Heart left ventricle (tissue), 16 donors: ENCODE measurements at regions of chr4 and their contacts with region 1.

Region 1: DNA sequence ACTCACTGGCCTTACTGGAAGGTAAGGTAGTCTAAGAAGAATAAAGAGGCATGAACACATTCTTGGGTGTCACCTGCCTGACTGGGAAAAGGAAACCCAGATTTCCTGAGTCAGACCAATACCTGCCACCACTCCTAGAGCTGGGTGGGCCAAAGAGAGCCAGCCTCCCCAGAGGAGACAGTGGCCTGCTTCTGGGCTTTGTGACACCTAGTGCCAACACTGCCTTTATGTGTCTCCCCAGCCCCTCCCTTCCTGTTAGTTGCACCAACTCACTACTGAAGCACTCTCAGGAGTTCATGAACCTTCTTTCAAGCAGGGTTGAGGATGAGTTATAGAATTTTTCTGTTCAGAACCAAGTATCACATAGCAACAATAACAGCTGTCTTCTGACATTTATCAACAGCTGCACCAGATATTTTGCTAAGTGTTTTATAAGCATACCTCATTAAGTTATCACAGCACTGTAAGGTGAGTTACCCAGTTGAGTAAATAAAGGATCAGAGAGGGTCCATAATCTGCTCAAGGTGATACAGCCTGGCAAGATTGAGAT is 77.6 kb upstream of the ETNPPL start:
- DNase-seq: no peak
- ATAC-seq: no peak
- H3K4me3 ChIP-seq: no peak overlapping the region
- H3K27ac ChIP-seq: no peak overlapping the region
- H3K4me1 ChIP-seq: no peaks in the 10 kb centered on the region
- H3K27me3 ChIP-seq: no peaks in the 10 kb centered on the region
- CTCF ChIP-seq: no peak
- POLR2A ChIP-seq: no peak

Region 2: GRCh38 chr4:108620101-108620932 is 220.2 kb before region 1 on chr4 and contains the start of gene RPL34:
- intact Hi-C with region 1: no loop called
- DNase-seq: peak; percentile 96 to 99 (median 97)
- ATAC-seq: peak; percentile 100
- H3K4me3 ChIP-seq: peak within 1 kb of the TSS; percentile 38 to 92 (median 78)
- H3K27ac ChIP-seq: peak within 1 kb of the TSS; percentile 54 to 88 (median 80)
- H3K4me1 ChIP-seq: peaks cover 0 to 46% (median 20%) of the 10 kb centered on the region in 12 donors
- H3K27me3 ChIP-seq: no peaks in the 10 kb centered on the region
- CTCF ChIP-seq: no peak
- POLR2A ChIP-seq: peak in 1 of 2 donors; percentile 85
- total RNA-seq, gene RPL34: 334 to 856 (median 719) TPM

Region 3: DNA sequence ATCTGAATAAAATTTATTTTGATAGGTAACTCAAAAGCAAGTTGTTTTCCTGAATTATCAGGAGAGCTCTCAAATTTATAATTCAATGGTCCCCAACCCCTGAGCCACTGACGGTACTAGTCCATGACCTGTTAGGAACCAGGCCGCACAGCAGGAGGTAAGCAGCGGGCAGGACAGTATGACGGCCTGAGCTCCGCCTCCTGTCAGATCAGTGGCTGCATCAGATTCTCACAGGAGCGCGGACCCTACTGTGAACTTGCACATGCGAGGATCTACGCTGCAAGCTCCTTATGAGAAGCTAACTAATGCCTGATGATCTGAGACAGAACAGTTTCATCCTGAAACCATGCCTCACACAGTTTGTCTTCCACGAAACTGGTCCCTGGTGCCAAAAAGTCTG is 555.2 kb after region 1 on chr4:
- intact Hi-C with region 1: loop called in 1 of 10 experiments (anchors 5 kb)
- DNase-seq: no peak
- ATAC-seq: no peak
- H3K4me3 ChIP-seq: no peak overlapping the region
- H3K27ac ChIP-seq: no peak overlapping the region
- H3K4me1 ChIP-seq: no peaks in the 10 kb centered on the region
- H3K27me3 ChIP-seq: no peaks in the 10 kb centered on the region
- CTCF ChIP-seq: no peak
- POLR2A ChIP-seq: no peak